GM18951 (cell line): ENCODE measurements at regions of chr4 and their contacts with region 1.

Region 1: DNA sequence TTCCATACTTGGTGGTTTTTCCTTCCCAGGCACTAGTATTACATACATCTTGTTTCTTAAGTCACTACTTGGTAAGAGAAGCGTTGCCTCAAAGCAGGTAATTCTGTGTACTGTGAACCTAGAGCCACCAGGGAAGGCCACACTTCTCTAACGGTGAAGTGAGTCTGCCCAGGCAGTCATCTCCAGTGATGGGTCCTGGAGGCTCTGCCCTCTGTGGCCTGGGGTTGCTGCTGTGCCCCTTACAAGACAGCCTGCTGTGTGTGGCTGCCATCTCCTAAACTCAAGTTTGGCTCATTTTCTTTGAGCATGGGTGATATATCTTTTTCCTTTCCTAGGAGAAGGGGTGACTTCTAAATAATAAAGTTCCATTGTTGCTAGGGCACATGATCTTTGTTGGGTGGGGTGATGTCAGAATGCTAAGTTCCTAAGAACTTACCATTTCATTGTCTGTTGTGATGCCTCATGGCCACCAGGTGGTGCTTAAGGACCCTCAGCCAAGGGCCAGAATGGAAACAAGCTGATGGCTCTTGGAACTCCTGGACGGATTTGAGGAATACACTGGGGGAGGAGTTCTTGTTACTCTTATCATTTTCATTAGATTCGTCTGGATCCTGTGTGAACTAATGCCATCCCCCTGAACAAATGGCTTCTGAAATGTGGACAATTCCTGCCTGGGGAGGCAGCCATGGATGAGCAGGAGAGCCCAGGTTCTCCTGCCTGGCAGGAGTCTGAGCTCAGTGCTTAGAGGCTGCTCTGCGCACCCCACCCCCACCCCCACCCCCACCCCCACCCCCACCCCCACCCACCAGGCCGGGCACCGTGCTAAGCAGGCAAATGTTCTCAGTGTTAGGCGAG is 41.1 kb upstream of the WDR1 start:
- POLR2A ChIP-seq: no peak

Region 2: GRCh38 chr4:10413177-10413576 is 255.5 kb after region 1 on chr4:
- in situ Hi-C with region 1: no loop called
- POLR2A ChIP-seq: no peak

Region 3: GRCh38 chr4:10526429-10527222 is 368.9 kb after region 1 on chr4:
- in situ Hi-C with region 1: loop called (anchors 10 kb)
- POLR2A ChIP-seq: no peak

Region 4: DNA sequence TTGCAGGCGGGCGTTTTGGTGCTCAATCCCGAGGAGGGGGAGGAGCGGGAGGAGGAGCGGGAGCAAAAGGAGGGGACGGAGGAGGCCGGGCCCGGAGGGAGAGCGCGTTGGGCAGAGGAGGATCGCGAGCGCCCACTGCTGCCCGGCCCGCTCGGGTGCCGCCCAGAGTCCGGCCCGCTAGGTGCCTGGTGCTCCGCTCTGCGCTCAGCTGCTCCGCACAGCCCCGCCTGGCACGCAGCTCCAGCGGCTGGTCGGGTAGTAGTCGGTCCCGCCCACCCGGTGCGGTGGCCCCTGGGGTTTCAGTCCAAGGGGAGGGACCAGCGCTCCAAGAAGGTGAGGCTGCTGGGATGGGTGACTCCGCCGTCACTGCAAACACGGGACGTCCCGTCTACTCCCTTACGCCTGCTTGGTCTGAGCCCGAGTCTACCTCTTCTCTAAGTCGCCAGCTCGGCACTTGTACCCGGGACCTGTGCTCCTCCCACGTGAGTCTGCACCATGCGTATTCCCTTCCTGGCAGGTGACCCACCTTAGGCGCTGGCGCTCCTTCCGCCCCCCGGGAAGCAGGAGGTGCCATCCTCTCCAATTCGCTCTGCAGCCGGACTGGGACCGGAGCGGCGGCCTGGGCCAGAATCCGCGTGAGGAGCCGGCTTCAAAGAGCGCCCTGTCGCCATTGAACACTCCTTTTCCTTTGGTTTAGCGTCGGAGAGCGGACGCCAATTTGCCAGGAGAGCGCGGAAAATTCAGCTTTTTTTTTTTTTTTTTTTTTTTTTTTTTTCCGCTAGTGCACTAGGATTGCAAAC is 1271.4 kb after region 1 on chr4:
- in situ Hi-C with region 1: loop called (anchors 25 kb)
- POLR2A ChIP-seq: no peak